HCT116 (cell line): ENCODE measurements at regions of chr19 and their contacts with region 1.

Region 1: DNA sequence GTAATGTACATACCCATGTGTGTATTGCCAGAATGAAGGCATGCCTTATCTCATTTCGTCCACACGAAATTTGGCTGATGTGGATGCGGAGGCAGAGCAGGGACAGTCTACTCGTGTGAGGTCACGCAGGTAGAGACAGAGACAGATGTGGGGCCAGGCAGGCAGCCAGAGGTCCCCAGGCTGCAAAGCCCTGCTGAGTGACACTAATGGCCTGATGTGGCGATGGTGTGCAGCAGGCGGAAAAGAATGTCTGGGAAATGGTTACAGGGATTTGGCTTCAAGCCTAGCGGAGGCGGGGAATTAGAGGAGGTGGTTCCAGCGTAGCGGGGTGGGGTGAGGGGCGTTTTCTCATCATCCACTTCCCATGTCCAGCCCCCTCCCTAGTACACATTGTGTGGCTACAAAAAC is 4.2 kb upstream of the IZUMO2 start:
- DNase-seq: no peak
- ATAC-seq: no peak
- H3K4me3 ChIP-seq: no peak overlapping the region
- H3K27ac ChIP-seq: no peak overlapping the region
- H3K4me1 ChIP-seq: peaks cover 0 to 7% of the 10 kb centered on the region in 2 experiments; a peak in 2 of 4 replicates
- H3K27me3 ChIP-seq: no peaks in the 10 kb centered on the region
- CTCF ChIP-seq: no peak
- POLR2A ChIP-seq: no peak
- RAD21 ChIP-seq: no peak

Region 2: GRCh38 chr19:50191212-50191611 is 23.9 kb after region 1 on chr19:
- CTCF ChIA-PET with region 1: no interaction called
- POLR2A ChIA-PET with region 1: no interaction called
- RAD21 ChIA-PET with region 1: no interaction called
- intact Hi-C with region 1: no loop called
- DNase-seq: no peak
- ATAC-seq: no peak
- H3K4me3 ChIP-seq: no peak overlapping the region
- H3K27ac ChIP-seq: no peak overlapping the region
- H3K4me1 ChIP-seq: no peaks in the 10 kb centered on the region
- H3K27me3 ChIP-seq: peaks cover 14% of the 10 kb centered on the region; the same call in 1 of the 2 replicates
- CTCF ChIP-seq: no peak
- POLR2A ChIP-seq: no peak
- RAD21 ChIP-seq: no peak

Region 3: DNA sequence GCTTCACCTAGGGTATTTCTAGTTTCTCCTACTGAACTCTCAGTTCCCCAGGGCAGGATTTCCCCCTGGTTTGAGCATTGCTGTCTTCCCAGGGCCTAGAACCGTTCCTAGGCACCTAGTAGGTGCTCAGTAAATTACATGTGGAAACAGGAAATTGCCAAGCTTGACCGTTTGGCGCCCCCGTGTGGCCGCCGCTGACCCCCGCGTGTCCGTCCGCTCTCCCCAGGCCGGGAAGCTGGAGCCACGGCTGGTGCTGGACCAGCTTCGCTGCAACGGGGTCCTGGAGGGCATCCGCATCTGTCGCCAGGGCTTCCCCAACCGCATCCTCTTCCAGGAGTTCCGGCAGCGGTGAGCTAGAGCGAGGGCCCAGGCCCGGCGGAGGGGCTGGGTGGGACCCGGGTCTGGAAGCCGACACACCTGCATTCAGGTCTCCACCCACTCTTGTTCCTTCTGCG is 91.6 kb after region 1 on chr19:
- CTCF ChIA-PET with region 1: interaction called, 3 read pairs
- POLR2A ChIA-PET with region 1: no interaction called
- RAD21 ChIA-PET with region 1: no interaction called
- intact Hi-C with region 1: loop called (anchors 1 kb)
- DNase-seq: no peak
- ATAC-seq: peak; percentile 88
- H3K4me3 ChIP-seq: no peak overlapping the region
- H3K27ac ChIP-seq: no peak overlapping the region
- H3K4me1 ChIP-seq: no peaks in the 10 kb centered on the region
- H3K27me3 ChIP-seq: no peaks in the 10 kb centered on the region
- CTCF ChIP-seq: peak; percentile 69 to 94 (median 87); a peak in 5 of 6 replicates
- POLR2A ChIP-seq: no peak
- RAD21 ChIP-seq: peak; percentile 86

Region 4: GRCh38 chr19:50329146-50329925 is 162.0 kb after region 1 on chr19 and contains the start of gene KCNC3:
- CTCF ChIA-PET with region 1: interaction called, 3 read pairs
- POLR2A ChIA-PET with region 1: no interaction called
- RAD21 ChIA-PET with region 1: no interaction called
- intact Hi-C with region 1: loop called (anchors 2 kb)
- DNase-seq: peak; percentile 99
- ATAC-seq: peak; percentile 75
- H3K4me3 ChIP-seq: peak within 1 kb of the TSS; percentile 62 to 64
- H3K27ac ChIP-seq: peak within 1 kb of the TSS; percentile 81
- H3K4me1 ChIP-seq: peaks cover 33 to 78% of the 10 kb centered on the region in 2 experiments
- H3K27me3 ChIP-seq: no peaks in the 10 kb centered on the region
- CTCF ChIP-seq: no peak
- POLR2A ChIP-seq: peak; percentile 84
- RAD21 ChIP-seq: no peak
- total RNA-seq, gene KCNC3: 6.9 TPM